ENCODE measurements at regions of chr1 and their contacts with region 1.

Region 1: GRCh38 chr1:209827384-209828262 is at the start of gene UTP25:
- DNase-seq: peak; percentile 80
- H3K4me3 ChIP-seq: peak within 1 kb of the TSS; percentile 81 to 88
- H3K27ac ChIP-seq: peak within 1 kb of the TSS; percentile 76 to 98
- H3K4me1 ChIP-seq: peaks cover 6 to 33% of the 10 kb centered on the region in 2 experiments
- H3K27me3 ChIP-seq: no peaks in the 10 kb centered on the region
- CTCF ChIP-seq: peak; percentile 75
- EP300 ChIP-seq: no peak; a peak in 1 of 4 replicates
- RAD21 ChIP-seq: peak; percentile 49
- polyA plus RNA-seq, gene UTP25: 6.3 and 9.3 TPM in 2 replicates

Region 2: GRCh38 chr1:209775678-209776077 is 51.9 kb before region 1 on chr1:
- CTCF ChIA-PET with region 1: interaction called, 11 read pairs
- POLR2A ChIA-PET with region 1: no interaction called
- DNase-seq: no peak
- H3K4me3 ChIP-seq: no peak overlapping the region
- H3K27ac ChIP-seq: no peak overlapping the region
- H3K4me1 ChIP-seq: peaks cover 5 to 10% of the 10 kb centered on the region in 2 experiments; a peak in 2 of 4 replicates
- H3K27me3 ChIP-seq: no peaks in the 10 kb centered on the region
- CTCF ChIP-seq: no peak
- EP300 ChIP-seq: no peak
- RAD21 ChIP-seq: no peak

Region 3: GRCh38 chr1:209790286-209791193 is 37.1 kb before region 1 on chr1:
- CTCF ChIA-PET with region 1: interaction called, 12 read pairs
- POLR2A ChIA-PET with region 1: interaction called, 3 read pairs
- DNase-seq: no peak
- H3K4me3 ChIP-seq: no peak overlapping the region
- H3K27ac ChIP-seq: peak overlapping the region in 1 of 2 experiments; percentile 76; a peak in 2 of 4 replicates
- H3K4me1 ChIP-seq: peaks cover 0 to 15% of the 10 kb centered on the region in 2 experiments; a peak in 1 of 4 replicates
- H3K27me3 ChIP-seq: no peaks in the 10 kb centered on the region
- CTCF ChIP-seq: no peak
- EP300 ChIP-seq: no peak
- RAD21 ChIP-seq: no peak

Region 4: GRCh38 chr1:209815490-209815889 is 12.1 kb before region 1 on chr1:
- CTCF ChIA-PET with region 1: interaction called, 78 read pairs
- POLR2A ChIA-PET with region 1: interaction called, 6 read pairs
- DNase-seq: no peak
- H3K4me3 ChIP-seq: no peak overlapping the region
- H3K27ac ChIP-seq: no peak overlapping the region
- H3K4me1 ChIP-seq: peaks cover 0 to 13% of the 10 kb centered on the region in 2 experiments; a peak in 2 of 4 replicates
- H3K27me3 ChIP-seq: no peaks in the 10 kb centered on the region
- CTCF ChIP-seq: no peak
- EP300 ChIP-seq: no peak
- RAD21 ChIP-seq: no peak

Region 5: GRCh38 chr1:209860293-209860881 is 32.8 kb after region 1 on chr1:
- CTCF ChIA-PET with region 1: interaction called, 14 read pairs
- POLR2A ChIA-PET with region 1: no interaction called
- DNase-seq: peak; percentile 89
- H3K4me3 ChIP-seq: peak overlapping the region in 1 of 2 experiments; percentile 53; a peak in 1 of 4 replicates
- H3K27ac ChIP-seq: peak overlapping the region in 1 of 2 experiments; percentile 4; a peak in 1 of 4 replicates
- H3K4me1 ChIP-seq: peaks cover 12 to 14% of the 10 kb centered on the region in 2 experiments; a peak in 3 of 4 replicates
- H3K27me3 ChIP-seq: no peaks in the 10 kb centered on the region
- CTCF ChIP-seq: peak; percentile 94
- EP300 ChIP-seq: no peak
- RAD21 ChIP-seq: peak; percentile 93

Measured in SK-N-SH (cell line).